Activated CD4-positive, alpha-beta memory T cell treated with anti-CD3 and anti-CD28 coated beads for 36 hours (primary cell): ENCODE measurements at regions of chr12 and their contacts with region 1.

Region 1: DNA sequence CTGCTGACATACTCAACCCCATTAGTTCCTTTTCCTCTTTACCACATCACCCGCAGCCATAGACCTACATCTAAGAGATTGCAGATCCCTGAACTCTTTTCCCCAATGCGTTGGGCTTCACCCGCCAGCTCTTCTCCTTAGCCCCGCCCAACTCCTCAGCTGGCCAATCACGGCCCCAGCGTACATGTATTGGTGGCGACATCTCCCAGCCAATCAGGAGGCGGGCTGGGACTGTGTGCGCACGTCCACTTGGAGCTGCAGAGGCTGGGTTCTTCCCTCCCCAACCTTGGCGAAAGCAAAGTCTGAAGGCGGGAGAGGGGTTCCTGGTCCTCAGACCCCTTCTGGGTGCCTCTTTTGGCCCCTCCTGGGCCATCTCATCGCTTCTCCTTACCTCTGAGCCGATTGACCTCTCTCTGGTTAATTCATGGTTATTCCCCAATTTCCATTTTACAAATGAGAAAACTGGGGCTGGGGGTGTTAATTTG is 11.0 kb downstream of the PDE1B start:
- DNase-seq: peak; percentile 94
- H3K4me3 Mint-ChIP-seq: peak overlapping the region; percentile 69
- H3K27ac Mint-ChIP-seq: peak overlapping the region; percentile 74
- H3K4me1 Mint-ChIP-seq: peaks cover 23% of the 10 kb centered on the region
- H3K27me3 Mint-ChIP-seq: no peaks in the 10 kb centered on the region

Region 2: DNA sequence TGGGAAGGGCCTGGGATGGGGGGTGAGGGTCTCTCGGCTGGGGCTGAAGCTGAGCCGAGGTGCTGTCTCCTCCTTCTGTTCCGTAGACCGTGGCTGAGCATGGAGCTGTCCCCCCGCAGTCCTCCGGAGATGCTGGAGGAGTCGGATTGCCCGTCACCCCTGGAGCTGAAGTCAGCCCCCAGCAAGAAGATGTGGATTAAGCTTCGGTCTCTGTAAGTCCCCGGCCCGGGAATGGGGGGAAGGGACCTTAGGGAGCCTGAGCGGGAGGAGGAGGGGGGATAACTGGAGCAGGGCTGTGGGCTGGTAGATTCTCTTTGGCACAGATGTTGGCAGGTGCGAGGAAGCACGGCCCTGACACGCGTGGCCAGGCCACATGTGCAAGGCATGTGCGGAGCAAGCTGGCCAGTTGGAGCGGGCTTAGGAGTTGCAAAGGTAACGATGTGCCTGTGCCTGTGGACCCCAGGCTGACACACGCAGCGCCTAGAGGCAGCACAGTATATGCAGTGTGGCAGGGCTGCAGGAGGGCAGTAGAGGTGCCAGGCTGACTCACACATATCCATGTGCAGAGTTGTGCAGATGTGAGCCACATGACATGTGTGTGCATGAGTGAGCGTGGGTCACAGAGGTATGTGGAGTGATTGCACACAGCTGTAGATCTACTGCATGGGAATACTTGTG is 10.5 kb before region 1 on chr12:
- CTCF ChIA-PET with region 1: interaction called, 4 read pairs
- POLR2A ChIA-PET with region 1: interaction called, 5 read pairs
- intact Hi-C with region 1: loop called (anchors 1 kb)
- DNase-seq: peak; percentile 58
- H3K4me3 Mint-ChIP-seq: peak overlapping the region; percentile 73
- H3K27ac Mint-ChIP-seq: no peak overlapping the region
- H3K4me1 Mint-ChIP-seq: peaks cover 37% of the 10 kb centered on the region
- H3K27me3 Mint-ChIP-seq: no peaks in the 10 kb centered on the region